A549 (cell line): ENCODE measurements at regions of chr6 and their contacts with region 1.

Region 1: DNA sequence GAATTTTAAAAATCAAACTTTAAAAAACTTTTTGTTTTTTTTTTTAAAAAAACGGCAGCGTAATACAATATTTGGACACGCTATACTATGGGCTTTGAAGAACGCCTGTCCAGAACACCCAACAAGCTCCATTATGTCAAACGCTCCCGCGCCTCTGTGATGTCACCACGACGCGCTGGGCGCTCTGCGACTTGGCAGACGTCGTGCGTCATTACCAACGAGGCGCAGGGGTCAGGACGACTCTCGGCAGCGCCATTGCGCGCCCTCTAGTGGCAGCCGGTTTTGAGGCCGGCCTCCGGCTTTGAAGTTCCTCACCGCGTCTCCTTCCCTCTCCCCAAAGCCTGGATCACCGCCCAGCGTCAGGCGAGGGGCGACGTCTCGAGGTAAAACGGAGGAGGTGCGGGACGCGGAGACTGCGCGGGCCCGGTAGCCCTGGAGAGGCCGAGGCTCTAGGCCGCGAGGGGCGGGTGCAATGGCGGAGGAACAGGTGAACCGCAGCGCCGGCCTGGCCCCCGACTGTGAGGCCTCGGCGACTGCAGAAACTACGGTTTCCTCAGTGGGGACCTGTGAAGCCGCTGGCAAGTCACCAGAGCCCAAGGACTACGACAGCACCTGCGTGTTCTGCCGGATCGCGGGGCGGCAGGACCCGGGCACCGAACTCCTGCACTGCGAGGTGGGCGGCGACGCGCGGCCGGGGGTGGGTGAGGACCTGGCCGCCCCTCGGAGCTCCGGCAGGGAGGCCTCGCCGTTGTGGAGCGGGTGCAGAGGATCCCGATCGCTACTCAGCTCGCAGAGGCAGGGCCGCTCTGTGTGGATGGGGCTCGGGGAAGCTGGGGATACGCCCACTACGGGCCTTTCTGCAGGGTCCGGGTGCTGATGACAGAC is at the start of gene HINT3:
- DNase-seq: peak; percentile 78 to 97
- ATAC-seq: peak; percentile 85 to 89
- H3K4me3 ChIP-seq: peak within 1 kb of the TSS; percentile 86
- H3K27ac ChIP-seq: peak within 1 kb of the TSS; percentile 95 to 96
- H3K4me1 ChIP-seq: peaks cover 22% of the 10 kb centered on the region; the same call in 2 of the 3 replicates
- CTCF ChIP-seq: peak; percentile 82
- EP300 ChIP-seq: no peak
- POLR2A ChIP-seq: no peak; the same call in 1 of the 2 replicates
- RAD21 ChIP-seq: peak; percentile 67 to 85
- polyA plus RNA-seq, gene HINT3: 4.7 and 7.2 TPM in 2 replicates

Region 2: GRCh38 chr6:125314019-125314581 is 642.6 kb before region 1 on chr6:
- CTCF ChIA-PET with region 1: interaction called, 10 read pairs
- POLR2A ChIA-PET with region 1: no interaction called
- DNase-seq: peak; percentile 27 to 53
- ATAC-seq: peak; percentile 90 to 93
- H3K4me3 ChIP-seq: no peak overlapping the region
- H3K27ac ChIP-seq: no peak overlapping the region
- H3K4me1 ChIP-seq: peaks cover 15% of the 10 kb centered on the region; the same call in 2 of the 3 replicates
- CTCF ChIP-seq: peak; percentile 81
- EP300 ChIP-seq: no peak
- POLR2A ChIP-seq: no peak
- RAD21 ChIP-seq: peak; percentile 84 to 86

Region 3: GRCh38 chr6:125700581-125701353 is 256.0 kb before region 1 on chr6:
- CTCF ChIA-PET with region 1: no interaction called
- POLR2A ChIA-PET with region 1: no interaction called
- DNase-seq: no peak
- ATAC-seq: no peak
- H3K4me3 ChIP-seq: no peak overlapping the region
- H3K27ac ChIP-seq: no peak overlapping the region
- H3K4me1 ChIP-seq: no peaks in the 10 kb centered on the region
- CTCF ChIP-seq: no peak
- EP300 ChIP-seq: no peak
- POLR2A ChIP-seq: no peak
- RAD21 ChIP-seq: no peak

Region 4: GRCh38 chr6:125858427-125859320 is 98.1 kb before region 1 on chr6:
- CTCF ChIA-PET with region 1: interaction called, 112 read pairs
- POLR2A ChIA-PET with region 1: no interaction called
- DNase-seq: peak; percentile 83 to 85
- ATAC-seq: peak; percentile 100
- H3K4me3 ChIP-seq: no peak overlapping the region
- H3K27ac ChIP-seq: peak overlapping the region; percentile 44 to 68; a peak in 4 of 6 replicates
- H3K4me1 ChIP-seq: peaks cover 18% of the 10 kb centered on the region
- CTCF ChIP-seq: peak; percentile 74
- EP300 ChIP-seq: no peak
- POLR2A ChIP-seq: no peak
- RAD21 ChIP-seq: peak; percentile 83 to 95

Region 5: GRCh38 chr6:125899726-125900182 is 57.0 kb before region 1 on chr6:
- CTCF ChIA-PET with region 1: interaction called, 29 read pairs
- POLR2A ChIA-PET with region 1: no interaction called
- DNase-seq: peak; percentile 72 to 86
- ATAC-seq: peak; percentile 94 to 97
- H3K4me3 ChIP-seq: peak overlapping the region; percentile 43
- H3K27ac ChIP-seq: peak overlapping the region; percentile 96 to 97
- H3K4me1 ChIP-seq: peaks cover 78% of the 10 kb centered on the region
- CTCF ChIP-seq: peak; percentile 17; the same call in 2 of the 3 replicates
- EP300 ChIP-seq: peak in 1 of 2 experiments; percentile 60; a peak in 3 of 5 replicates
- POLR2A ChIP-seq: no peak
- RAD21 ChIP-seq: no peak; a peak in 1 of 5 replicates

Region 6: DNA sequence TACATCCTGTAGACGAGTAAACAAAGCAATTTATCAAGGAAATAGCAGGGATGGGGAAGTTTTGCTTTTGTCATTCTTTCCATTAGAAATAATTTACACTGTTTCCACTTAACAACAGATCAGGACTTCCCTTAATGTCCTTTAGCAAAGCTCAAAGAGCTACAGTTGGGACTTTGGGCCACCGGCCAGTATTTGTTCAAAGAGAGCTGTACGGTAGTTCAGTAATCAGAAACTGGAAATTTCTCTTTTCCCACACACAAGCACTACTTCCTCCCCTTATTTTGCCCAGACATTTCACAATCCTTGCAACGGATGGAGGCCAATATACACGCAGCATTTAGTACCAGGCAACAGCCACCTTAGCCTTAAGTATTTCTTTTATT is 12.3 kb before region 1 on chr6:
- CTCF ChIA-PET with region 1: interaction called, 43 read pairs
- POLR2A ChIA-PET with region 1: interaction called, 10 read pairs
- DNase-seq: peak in 1 of 2 experiments; percentile 89
- ATAC-seq: peak; percentile 37 to 40; a peak in 3 of 6 replicates
- H3K4me3 ChIP-seq: no peak overlapping the region
- H3K27ac ChIP-seq: peak overlapping the region; percentile 93 to 98
- H3K4me1 ChIP-seq: peaks cover 96% of the 10 kb centered on the region
- CTCF ChIP-seq: no peak
- EP300 ChIP-seq: peak; percentile 71 to 84; a peak in 3 of 5 replicates
- POLR2A ChIP-seq: no peak
- RAD21 ChIP-seq: no peak; a peak in 1 of 5 replicates

Region 7: DNA sequence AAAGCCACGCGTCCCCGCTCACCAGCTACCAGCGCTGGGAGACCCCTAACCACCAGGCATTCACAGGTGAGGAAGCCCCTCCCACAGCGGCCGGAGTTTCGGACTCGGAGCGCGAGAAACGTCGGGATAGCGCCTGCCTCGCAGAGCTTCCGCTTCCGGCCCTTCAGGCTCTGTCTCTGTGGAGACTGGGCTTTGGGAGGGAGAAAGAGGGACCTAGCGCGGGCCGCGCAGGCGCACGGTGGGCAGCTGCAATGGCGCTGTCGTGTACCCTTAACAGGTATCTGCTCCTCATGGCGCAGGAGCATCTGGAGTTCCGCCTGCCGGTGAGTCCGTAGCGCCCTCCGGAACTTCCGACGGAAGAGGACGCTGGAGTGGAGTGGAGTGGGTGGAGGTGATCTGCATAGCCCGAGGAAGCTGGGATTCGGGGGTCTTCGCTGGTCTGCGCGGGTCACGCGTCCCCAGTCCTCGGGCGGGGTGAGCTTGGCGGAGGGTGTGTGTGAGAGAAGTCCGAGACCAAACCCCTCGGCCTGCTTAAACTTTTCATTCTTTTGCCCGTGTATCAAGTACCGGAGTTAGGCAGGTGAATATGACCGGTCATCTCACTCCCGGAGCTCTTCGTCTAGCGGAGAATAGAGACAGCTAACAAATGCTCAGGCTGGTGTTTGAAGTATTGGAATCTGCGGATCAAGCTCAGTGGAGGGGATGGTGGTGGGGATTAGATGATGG is 29.7 kb after region 1 on chr6 and contains the start of gene TRMT11:
- CTCF ChIA-PET with region 1: interaction called, 11 read pairs
- POLR2A ChIA-PET with region 1: interaction called, 7 read pairs
- DNase-seq: peak; percentile 85 to 89
- ATAC-seq: peak; percentile 97 to 99
- H3K4me3 ChIP-seq: peak within 1 kb of the TSS; percentile 68
- H3K27ac ChIP-seq: peak within 1 kb of the TSS; percentile 92 to 95
- H3K4me1 ChIP-seq: peaks cover 46% of the 10 kb centered on the region
- CTCF ChIP-seq: no peak
- EP300 ChIP-seq: no peak
- POLR2A ChIP-seq: peak; percentile 90
- RAD21 ChIP-seq: no peak
- polyA plus RNA-seq, gene TRMT11: 33.2 and 44.1 TPM in 2 replicates

Region 8: GRCh38 chr6:126227833-126228702 is 271.3 kb after region 1 on chr6:
- CTCF ChIA-PET with region 1: no interaction called
- POLR2A ChIA-PET with region 1: no interaction called
- DNase-seq: no peak
- ATAC-seq: no peak
- H3K4me3 ChIP-seq: no peak overlapping the region
- H3K27ac ChIP-seq: no peak overlapping the region
- H3K4me1 ChIP-seq: no peaks in the 10 kb centered on the region
- CTCF ChIP-seq: no peak
- EP300 ChIP-seq: no peak
- POLR2A ChIP-seq: no peak
- RAD21 ChIP-seq: no peak